Activated T-helper 1 cell treated with anti-CD3 and anti-CD28 coated beads, Interleukin-12 subunit alpha, Interleukin-12 subunit beta, Interleukin-2, Interleukin-4 antibody, amounts not matched to agents 30 ng/mL and 10 ng/mL and 1 ng/mL, durations not matched to agents 14 hours and 24 hours and 36 hours (primary cell): ENCODE measurements at regions of chr10 and their contacts with region 1.

Region 1: DNA sequence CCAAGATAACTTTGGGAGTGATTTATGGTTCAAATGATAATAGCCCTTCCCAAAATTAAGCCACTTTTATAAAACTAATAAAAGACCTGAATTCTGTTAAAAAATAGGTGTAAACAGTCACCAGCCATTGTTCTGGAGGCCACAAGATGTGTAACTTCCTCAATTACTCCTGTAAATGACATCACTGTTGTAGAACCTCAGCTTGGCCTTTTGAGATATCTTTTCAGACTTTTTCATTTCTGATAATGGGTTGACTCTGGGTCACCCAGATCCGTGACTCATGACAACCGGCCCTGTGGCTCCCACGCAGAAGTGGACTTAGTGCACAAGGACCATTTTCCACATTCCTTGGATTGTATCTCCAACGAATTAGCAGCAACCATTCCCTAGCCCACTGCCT is 106.6 kb downstream of the DKK1 start:
- DNase-seq: no peak
- H3K4me3 Mint-ChIP-seq: no peak overlapping the region
- H3K27ac Mint-ChIP-seq: no peak overlapping the region
- H3K4me1 Mint-ChIP-seq: no peaks in the 10 kb centered on the region
- H3K27me3 Mint-ChIP-seq: no peaks in the 10 kb centered on the region

Region 2: GRCh38 chr10:50653142-50653541 is 1767.5 kb before region 1 on chr10:
- intact Hi-C with region 1: no loop called
- DNase-seq: no peak
- H3K4me3 Mint-ChIP-seq: no peak overlapping the region
- H3K27ac Mint-ChIP-seq: no peak overlapping the region
- H3K4me1 Mint-ChIP-seq: peaks cover 22% of the 10 kb centered on the region
- H3K27me3 Mint-ChIP-seq: peaks cover 8% of the 10 kb centered on the region

Region 3: GRCh38 chr10:52368741-52369140 is 51.9 kb before region 1 on chr10:
- intact Hi-C with region 1: no loop called
- DNase-seq: no peak
- H3K4me3 Mint-ChIP-seq: no peak overlapping the region
- H3K27ac Mint-ChIP-seq: no peak overlapping the region
- H3K4me1 Mint-ChIP-seq: no peaks in the 10 kb centered on the region
- H3K27me3 Mint-ChIP-seq: no peaks in the 10 kb centered on the region

Region 4: DNA sequence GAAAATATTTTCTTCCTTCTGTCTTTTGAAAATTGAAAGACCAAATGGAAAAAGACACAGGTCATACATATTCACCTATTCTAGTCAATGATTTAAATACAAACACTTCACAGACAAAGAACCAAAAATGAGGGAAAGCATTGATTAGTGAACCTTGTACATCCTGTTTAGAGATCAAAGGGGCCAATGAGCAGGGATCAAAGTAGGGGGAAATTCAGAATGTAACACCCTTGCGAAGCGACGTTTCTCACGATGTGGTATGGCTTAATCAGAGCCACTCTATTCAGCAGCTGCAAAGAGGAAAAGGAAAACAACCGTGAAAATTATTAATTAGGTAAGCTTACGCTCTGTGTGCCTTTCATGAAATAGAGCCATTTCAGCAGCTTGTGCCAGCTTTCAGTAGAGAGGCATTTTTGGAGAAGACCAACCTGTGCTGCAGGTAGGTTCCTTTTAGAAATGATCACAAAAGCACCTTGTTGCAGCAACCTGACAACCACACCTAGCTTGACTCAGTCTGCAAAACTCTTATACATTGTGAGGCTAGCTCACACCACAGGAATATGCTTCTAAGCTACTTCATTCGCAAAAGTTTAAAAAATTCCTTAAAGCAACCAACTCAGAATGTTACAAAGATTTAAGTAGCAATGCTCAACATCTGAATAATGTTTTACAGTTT is 28.6 kb before region 1 on chr10:
- intact Hi-C with region 1: loop called (anchors 1 kb)
- DNase-seq: no peak
- H3K4me3 Mint-ChIP-seq: no peak overlapping the region
- H3K27ac Mint-ChIP-seq: no peak overlapping the region
- H3K4me1 Mint-ChIP-seq: no peaks in the 10 kb centered on the region
- H3K27me3 Mint-ChIP-seq: no peaks in the 10 kb centered on the region

Region 5: GRCh38 chr10:52409928-52410327 is 10.7 kb before region 1 on chr10:
- intact Hi-C with region 1: no loop called
- DNase-seq: no peak
- H3K4me3 Mint-ChIP-seq: no peak overlapping the region
- H3K27ac Mint-ChIP-seq: no peak overlapping the region
- H3K4me1 Mint-ChIP-seq: no peaks in the 10 kb centered on the region
- H3K27me3 Mint-ChIP-seq: no peaks in the 10 kb centered on the region

Region 6: DNA sequence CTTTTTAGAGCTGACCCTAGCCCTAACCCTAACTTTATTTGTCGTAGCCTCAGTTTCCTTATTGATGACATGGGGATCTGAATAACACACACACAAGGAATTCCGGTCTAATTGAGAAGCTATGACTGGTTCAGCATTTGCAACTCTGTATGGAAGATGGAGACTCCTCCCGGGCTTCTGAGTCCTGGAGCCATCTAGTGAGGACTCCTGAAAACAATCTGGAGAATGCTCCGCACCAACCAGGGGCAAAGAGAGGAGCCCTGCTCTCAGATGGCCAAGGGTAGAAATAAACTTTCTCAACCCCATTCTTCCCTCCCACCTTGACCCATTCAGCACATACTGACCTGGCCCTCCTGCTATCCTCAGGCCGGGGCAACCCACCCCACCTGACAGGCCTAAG is 325.5 kb after region 1 on chr10:
- intact Hi-C with region 1: no loop called
- DNase-seq: no peak
- H3K4me3 Mint-ChIP-seq: no peak overlapping the region
- H3K27ac Mint-ChIP-seq: no peak overlapping the region
- H3K4me1 Mint-ChIP-seq: no peaks in the 10 kb centered on the region
- H3K27me3 Mint-ChIP-seq: no peaks in the 10 kb centered on the region